ENCODE measurements at regions of chr17 and their contacts with region 1.

Region 1: GRCh38 chr17:61704935-61705449 is 114.0 kb upstream of the NACA2 start:
- DNase-seq: no peak
- H3K4me3 Mint-ChIP-seq: no peak overlapping the region
- H3K27ac Mint-ChIP-seq: no peak overlapping the region
- H3K4me1 Mint-ChIP-seq: no peaks in the 10 kb centered on the region
- H3K27me3 Mint-ChIP-seq: no peaks in the 10 kb centered on the region
- CTCF ChIP-seq: no peak

Region 2: GRCh38 chr17:61678339-61678738 is 26.7 kb before region 1 on chr17:
- CTCF ChIA-PET with region 1: no interaction called
- POLR2A ChIA-PET with region 1: no interaction called
- intact Hi-C with region 1: no loop called
- DNase-seq: no peak
- H3K4me3 Mint-ChIP-seq: no peak overlapping the region
- H3K27ac Mint-ChIP-seq: no peak overlapping the region
- H3K4me1 Mint-ChIP-seq: no peaks in the 10 kb centered on the region
- H3K27me3 Mint-ChIP-seq: no peaks in the 10 kb centered on the region
- CTCF ChIP-seq: no peak

Region 3: GRCh38 chr17:61689610-61690180 is 15.3 kb before region 1 on chr17:
- CTCF ChIA-PET with region 1: no interaction called
- POLR2A ChIA-PET with region 1: no interaction called
- intact Hi-C with region 1: no loop called
- DNase-seq: peak; percentile 9
- H3K4me3 Mint-ChIP-seq: no peak overlapping the region
- H3K27ac Mint-ChIP-seq: no peak overlapping the region
- H3K4me1 Mint-ChIP-seq: no peaks in the 10 kb centered on the region
- H3K27me3 Mint-ChIP-seq: no peaks in the 10 kb centered on the region
- CTCF ChIP-seq: no peak

Region 4: GRCh38 chr17:61757168-61757567 is 52.2 kb after region 1 on chr17:
- CTCF ChIA-PET with region 1: no interaction called
- POLR2A ChIA-PET with region 1: interaction called, 3 read pairs
- intact Hi-C with region 1: loop called (anchors 5 kb)
- DNase-seq: no peak
- H3K4me3 Mint-ChIP-seq: no peak overlapping the region
- H3K27ac Mint-ChIP-seq: no peak overlapping the region
- H3K4me1 Mint-ChIP-seq: no peaks in the 10 kb centered on the region
- H3K27me3 Mint-ChIP-seq: no peaks in the 10 kb centered on the region
- CTCF ChIP-seq: no peak